ENCODE measurements at regions of chr3 and their contacts with region 1.

Region 1: GRCh38 chr3:113745273-113746068 is 578 bp downstream of the NAA50 start:
- DNase-seq: peak; percentile 83 to 84
- H3K4me3 ChIP-seq: peak overlapping the region; percentile 88 to 100
- H3K27ac ChIP-seq: peak overlapping the region; percentile 98 to 100
- H3K4me1 ChIP-seq: peaks cover 0 to 50% (median 30%) of the 10 kb centered on the region in 4 donors
- H3K27me3 ChIP-seq: no peaks in the 10 kb centered on the region
- CTCF ChIP-seq: peak; percentile 52 to 55

Region 2: DNA sequence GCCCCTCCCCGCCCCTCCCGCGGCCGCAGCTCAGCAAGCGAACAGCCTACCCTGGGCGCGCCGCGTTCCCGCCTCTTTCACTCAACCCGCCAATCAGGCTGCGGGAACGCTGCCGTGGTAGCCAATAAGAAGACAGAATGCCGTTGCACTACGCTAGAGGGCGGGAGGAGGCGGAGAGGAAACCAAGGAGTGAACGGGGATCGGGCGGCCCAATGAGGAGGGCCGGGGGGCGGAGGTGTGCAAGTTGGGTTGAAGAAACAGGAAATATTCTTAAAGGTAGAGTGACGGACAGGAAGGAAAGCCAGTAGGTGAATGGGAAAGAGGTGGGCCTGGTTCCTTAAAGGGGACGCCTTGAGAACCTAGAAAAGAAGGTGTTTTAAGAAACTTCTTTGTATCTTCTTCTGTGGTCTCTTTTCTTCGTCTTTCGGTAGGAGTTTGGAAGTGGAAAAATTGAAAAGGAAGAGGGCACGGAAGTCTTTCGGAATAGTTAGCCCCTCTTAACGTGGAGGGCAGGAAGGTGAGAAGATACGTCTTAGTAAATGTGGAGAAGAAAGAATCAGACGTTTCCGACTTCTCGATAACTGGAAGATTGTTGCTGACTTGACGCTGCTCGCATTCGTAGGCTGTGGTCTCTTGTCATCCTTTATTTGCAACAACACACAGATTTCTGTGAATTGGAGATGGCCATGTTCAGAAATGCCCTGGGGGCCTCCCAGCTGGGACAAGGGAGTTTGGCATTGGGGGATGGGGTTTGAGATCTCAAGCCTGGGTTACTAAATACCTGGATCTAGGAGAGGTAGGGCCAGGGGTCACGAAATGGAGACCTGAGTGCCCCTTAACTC is 48.6 kb before region 1 on chr3:
- intact Hi-C with region 1: loop called (anchors 2 kb)
- DNase-seq: peak; percentile 100
- H3K4me3 ChIP-seq: peak overlapping the region; percentile 100
- H3K27ac ChIP-seq: peak overlapping the region; percentile 99
- H3K4me1 ChIP-seq: peaks cover 0 to 39% (median 17%) of the 10 kb centered on the region in 4 donors
- H3K27me3 ChIP-seq: no peaks in the 10 kb centered on the region
- CTCF ChIP-seq: peak in 1 of 2 experiments; percentile 13

Region 3: DNA sequence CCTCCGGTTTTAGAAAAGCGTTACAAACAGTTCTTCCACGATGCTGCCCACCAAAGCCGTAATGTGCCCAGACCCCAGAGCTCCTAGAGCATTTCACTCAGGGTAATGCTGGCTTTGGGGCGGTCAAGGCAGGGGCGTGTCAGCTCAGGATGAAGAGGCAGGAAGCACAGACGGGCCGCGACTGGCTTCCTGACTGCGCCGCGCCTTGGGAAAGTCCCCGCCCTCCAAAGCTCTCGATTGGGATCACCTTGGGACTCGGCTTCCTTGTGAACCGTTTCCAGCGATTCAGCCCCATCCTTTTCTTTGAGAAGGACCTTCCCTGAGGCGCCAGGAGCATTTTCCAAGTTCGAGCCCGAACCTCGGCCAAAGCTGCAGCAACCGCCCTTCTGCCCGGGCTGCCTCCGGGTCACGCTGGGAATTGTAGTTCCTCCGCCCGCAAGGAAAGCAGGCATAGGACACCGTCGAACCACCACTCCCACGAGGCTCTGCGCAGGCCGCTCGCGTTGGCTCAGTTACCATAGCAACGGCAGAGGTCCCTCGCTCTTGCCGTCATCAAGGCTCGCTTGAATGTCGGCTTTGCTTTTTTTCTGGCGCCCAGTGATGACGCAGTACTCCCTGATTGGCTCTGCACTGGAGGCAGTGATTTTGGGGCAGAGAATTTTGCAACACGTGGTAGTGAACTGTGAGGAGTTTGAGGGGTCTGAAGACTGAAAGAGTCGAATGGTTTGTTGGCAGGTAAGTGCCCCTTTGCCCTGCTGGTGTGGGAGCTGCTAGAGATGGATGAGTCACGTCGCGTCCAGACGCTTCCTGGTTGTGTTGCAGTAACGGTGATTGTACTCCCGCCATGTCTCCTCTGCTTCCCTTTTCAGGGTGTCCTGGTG is 310.9 kb after region 1 on chr3 and contains the starts of genes CCDC191 and QTRT2:
- intact Hi-C with region 1: loop called (anchors 5 kb)
- DNase-seq: peak; percentile 99
- H3K4me3 ChIP-seq: peak within 1 kb of the TSS; percentile 71 to 82
- H3K27ac ChIP-seq: peak within 1 kb of the TSS; percentile 75 to 78
- H3K4me1 ChIP-seq: peaks cover 0 to 20% (median 12%) of the 10 kb centered on the region in 4 donors
- H3K27me3 ChIP-seq: no peaks in the 10 kb centered on the region
- CTCF ChIP-seq: no peak

Measured in tibial artery (tissue), 4 donors.